PC-9 (cell line): ENCODE measurements at regions of chr6 and their contacts with region 1.

Region 1: GRCh38 chr6:11232193-11232769 is at the start of gene NEDD9:
- DNase-seq: peak; percentile 90 to 96
- H3K4me3 ChIP-seq: peak within 1 kb of the TSS; percentile 81
- H3K27ac ChIP-seq: peak within 1 kb of the TSS; percentile 81
- H3K4me1 ChIP-seq: peaks cover 31% of the 10 kb centered on the region
- H3K27me3 ChIP-seq: no peaks in the 10 kb centered on the region
- CTCF ChIP-seq: no peak
- total RNA-seq, gene NEDD9: 35.8 and 57.5 TPM in 2 replicates

Region 2: DNA sequence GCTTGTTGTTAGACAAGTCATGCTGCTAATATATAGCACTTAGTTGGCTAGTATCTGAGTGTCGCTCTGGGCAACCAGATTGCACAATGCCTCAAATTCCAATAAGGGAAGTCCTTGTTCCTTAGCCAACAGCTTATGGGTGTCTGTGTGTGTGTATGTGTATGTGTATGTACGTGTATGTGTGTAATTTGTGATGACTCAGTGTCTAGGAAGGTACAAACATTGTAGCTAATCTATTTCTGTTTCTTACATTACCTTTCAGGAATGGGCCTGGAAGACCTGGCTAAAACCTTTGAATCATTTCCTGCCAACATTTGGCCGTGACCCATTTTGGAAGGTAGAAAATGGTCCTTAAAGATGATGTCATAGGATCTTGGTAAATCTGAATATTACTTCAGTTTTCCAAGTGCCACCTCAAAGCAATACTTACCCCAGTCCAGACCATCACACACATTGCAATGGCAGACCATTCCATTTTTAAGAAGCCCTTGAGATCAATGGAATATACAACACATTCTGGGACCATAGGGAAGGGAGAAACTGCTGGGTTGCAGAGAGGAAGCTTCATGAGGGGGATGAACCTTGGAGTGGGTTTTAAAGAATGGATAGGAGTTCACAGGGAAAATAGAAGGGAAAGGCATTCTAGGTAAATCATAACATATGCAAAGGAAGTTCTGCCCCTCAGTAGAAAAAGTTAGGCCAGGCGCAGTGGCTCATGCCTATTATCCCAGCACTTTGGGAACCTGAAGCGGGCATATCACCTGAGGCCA is 24.9 kb before region 1 on chr6:
- CTCF ChIA-PET with region 1: interaction called, 6 read pairs
- POLR2A ChIA-PET with region 1: interaction called, 44 read pairs
- intact Hi-C with region 1: loop called (anchors 1 kb)
- DNase-seq: peak; percentile 84 to 98
- H3K4me3 ChIP-seq: no peak overlapping the region; the same call in 1 of the 2 replicates
- H3K27ac ChIP-seq: peak overlapping the region; percentile 92
- H3K4me1 ChIP-seq: peaks cover 36% of the 10 kb centered on the region
- H3K27me3 ChIP-seq: no peaks in the 10 kb centered on the region
- CTCF ChIP-seq: no peak

Region 3: GRCh38 chr6:11253601-11254000 is 21.3 kb after region 1 on chr6:
- CTCF ChIA-PET with region 1: interaction called, 12 read pairs
- POLR2A ChIA-PET with region 1: interaction called, 22 read pairs
- intact Hi-C with region 1: no loop called
- DNase-seq: peak in 1 of 2 experiments; percentile 55
- H3K4me3 ChIP-seq: no peak overlapping the region
- H3K27ac ChIP-seq: no peak overlapping the region
- H3K4me1 ChIP-seq: peaks cover 35% of the 10 kb centered on the region
- H3K27me3 ChIP-seq: no peaks in the 10 kb centered on the region
- CTCF ChIP-seq: no peak

Region 4: GRCh38 chr6:11277275-11278206 is 45.3 kb after region 1 on chr6:
- CTCF ChIA-PET with region 1: no interaction called
- POLR2A ChIA-PET with region 1: interaction called, 8 read pairs
- intact Hi-C with region 1: loop called (anchors 1 kb)
- DNase-seq: peak; percentile 56 to 63
- H3K4me3 ChIP-seq: no peak overlapping the region
- H3K27ac ChIP-seq: no peak overlapping the region
- H3K4me1 ChIP-seq: peaks cover 10% of the 10 kb centered on the region; the same call in 1 of the 2 replicates
- H3K27me3 ChIP-seq: no peaks in the 10 kb centered on the region
- CTCF ChIP-seq: no peak

Region 5: GRCh38 chr6:11356404-11357155 is 124.3 kb after region 1 on chr6:
- CTCF ChIA-PET with region 1: no interaction called
- POLR2A ChIA-PET with region 1: interaction called, 50 read pairs
- intact Hi-C with region 1: no loop called
- DNase-seq: no peak
- H3K4me3 ChIP-seq: no peak overlapping the region
- H3K27ac ChIP-seq: peak overlapping the region; percentile 74
- H3K4me1 ChIP-seq: peaks cover 14% of the 10 kb centered on the region
- H3K27me3 ChIP-seq: no peaks in the 10 kb centered on the region
- CTCF ChIP-seq: no peak

Region 6: DNA sequence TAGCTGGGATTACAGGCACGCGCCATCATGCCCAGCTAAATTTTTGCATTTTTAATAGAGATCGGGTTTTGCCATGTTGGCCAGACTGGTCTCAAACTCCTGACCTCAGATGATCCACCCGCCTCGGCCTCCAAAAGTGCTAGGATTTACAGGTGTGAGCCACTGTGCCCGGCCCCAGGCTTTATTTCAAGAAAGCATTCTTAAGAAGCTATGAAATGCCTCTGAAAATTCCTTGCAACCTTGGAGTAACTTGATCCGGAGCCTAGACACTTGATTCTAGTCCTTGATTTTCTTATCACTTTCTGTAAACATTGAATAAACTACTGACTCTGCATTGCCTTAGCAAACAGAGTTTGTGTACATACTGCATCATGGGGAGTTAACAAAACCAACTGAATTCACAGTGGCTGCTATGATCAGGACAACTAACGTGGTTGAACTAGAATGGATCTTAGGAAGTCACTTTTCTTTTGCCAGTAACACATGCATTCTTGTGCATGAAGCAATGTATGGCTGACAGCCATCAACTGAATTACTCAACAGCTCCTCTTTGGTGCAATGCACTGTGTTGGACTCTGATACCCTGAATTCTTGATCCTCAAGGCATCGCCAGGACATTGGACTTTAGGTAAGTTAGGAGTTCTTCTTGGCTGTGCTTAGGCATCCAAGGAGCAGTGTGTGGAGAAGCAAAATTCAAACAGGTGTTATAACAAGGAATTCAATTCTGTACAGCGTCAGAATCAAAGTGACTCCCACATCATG is 202.5 kb after region 1 on chr6:
- CTCF ChIA-PET with region 1: no interaction called
- POLR2A ChIA-PET with region 1: interaction called, 9 read pairs
- intact Hi-C with region 1: loop called (anchors 1 kb)
- DNase-seq: peak; percentile 79 to 98
- H3K4me3 ChIP-seq: no peak overlapping the region
- H3K27ac ChIP-seq: peak overlapping the region; percentile 87
- H3K4me1 ChIP-seq: peaks cover 52% of the 10 kb centered on the region
- H3K27me3 ChIP-seq: no peaks in the 10 kb centered on the region
- CTCF ChIP-seq: no peak

Region 7: GRCh38 chr6:11738661-11739375 is 506.5 kb after region 1 on chr6:
- CTCF ChIA-PET with region 1: no interaction called
- POLR2A ChIA-PET with region 1: no interaction called
- intact Hi-C with region 1: no loop called
- DNase-seq: no peak
- H3K4me3 ChIP-seq: no peak overlapping the region
- H3K27ac ChIP-seq: no peak overlapping the region
- H3K4me1 ChIP-seq: peaks cover 17% of the 10 kb centered on the region
- H3K27me3 ChIP-seq: no peaks in the 10 kb centered on the region
- CTCF ChIP-seq: no peak

Region 8: DNA sequence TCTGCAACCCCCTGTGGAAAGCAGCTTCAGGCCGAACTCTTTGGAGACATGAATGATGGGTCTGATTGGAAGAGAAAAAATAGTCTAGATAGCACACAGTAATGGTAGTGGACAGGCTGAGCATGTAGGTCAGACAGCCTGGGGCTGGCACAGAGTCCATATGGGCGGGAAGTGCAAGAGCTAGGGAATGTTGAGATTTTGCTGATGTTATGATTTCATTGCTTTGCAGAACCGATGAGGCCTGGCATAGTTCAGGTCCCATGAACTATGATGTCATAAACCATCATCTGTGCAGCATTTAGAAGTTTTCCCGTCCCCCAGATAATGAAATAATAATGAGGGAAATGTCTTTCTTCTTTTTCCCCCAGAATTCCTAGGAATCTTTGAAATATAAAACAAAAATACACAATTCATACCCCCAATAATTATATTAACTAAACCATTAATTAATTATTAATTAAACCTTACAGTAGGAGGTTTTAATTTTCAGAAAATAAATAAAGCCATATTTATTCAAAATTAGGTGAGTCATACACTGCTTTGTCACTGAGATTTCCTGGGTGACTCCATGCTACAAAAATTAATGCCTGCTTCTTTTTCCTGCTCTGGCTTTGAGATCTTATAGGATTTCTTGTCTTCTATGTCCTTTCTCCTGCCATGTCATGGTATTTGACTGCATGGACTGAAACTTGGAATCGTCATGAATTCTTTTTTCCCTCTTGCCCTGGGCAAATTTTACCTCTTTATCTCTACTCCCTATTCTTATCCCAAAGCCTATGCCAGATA is 1617.3 kb after region 1 on chr6:
- CTCF ChIA-PET with region 1: no interaction called
- POLR2A ChIA-PET with region 1: no interaction called
- intact Hi-C with region 1: no loop called
- DNase-seq: no peak
- H3K4me3 ChIP-seq: no peak overlapping the region
- H3K27ac ChIP-seq: no peak overlapping the region
- H3K4me1 ChIP-seq: no peaks in the 10 kb centered on the region
- H3K27me3 ChIP-seq: peaks cover 51% of the 10 kb centered on the region
- CTCF ChIP-seq: no peak